ENCODE measurements at regions of chr4 and their contacts with region 1.

Region 1: DNA sequence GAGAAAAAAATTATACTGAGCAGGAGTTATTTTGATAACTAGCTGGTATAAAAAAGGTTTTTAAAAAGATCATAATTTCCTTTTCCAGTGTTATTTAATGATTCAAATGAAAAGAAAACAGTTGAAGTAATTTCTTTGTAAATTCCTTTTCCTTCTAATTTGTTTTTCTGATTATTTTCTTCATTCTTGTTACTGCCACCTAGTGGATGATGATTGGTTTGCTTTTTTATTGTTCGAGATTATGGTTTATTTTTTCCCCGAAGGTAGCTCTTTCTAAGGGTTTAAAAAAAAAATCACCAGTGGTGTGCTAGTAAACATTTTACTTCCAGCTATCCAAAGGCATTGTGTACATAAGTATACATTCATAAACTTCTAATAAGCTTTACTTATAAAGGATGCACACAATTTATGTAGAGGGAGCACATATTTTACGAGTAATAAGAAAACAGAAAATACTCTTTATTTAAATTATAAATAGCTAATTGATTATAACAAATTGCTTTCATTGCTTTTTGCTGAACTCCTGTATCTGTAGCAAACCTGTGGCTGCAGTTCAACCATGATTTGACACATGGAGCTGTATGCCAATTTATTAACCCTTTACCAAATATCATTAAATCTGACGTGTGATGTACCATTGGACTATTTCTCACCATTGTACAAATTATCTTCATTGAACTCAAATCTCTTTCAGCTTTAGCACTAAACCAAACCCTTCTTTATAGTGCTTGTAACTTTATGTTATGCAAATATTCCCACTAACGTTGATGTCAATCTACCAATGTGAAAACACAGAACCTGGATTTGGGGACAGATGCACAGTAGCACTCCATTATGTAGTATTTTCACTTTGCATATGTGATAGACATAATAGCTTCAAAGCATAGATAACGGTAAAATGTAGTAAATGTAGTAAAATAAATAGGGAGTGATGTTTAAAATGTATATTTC is 97.8 kb upstream of the ANK2 start:
- DNase-seq: no peak
- H3K4me3 Mint-ChIP-seq: no peak overlapping the region
- H3K27ac Mint-ChIP-seq: no peak overlapping the region
- H3K4me1 Mint-ChIP-seq: no peaks in the 10 kb centered on the region
- H3K27me3 Mint-ChIP-seq: peaks cover 15% of the 10 kb centered on the region

Region 2: DNA sequence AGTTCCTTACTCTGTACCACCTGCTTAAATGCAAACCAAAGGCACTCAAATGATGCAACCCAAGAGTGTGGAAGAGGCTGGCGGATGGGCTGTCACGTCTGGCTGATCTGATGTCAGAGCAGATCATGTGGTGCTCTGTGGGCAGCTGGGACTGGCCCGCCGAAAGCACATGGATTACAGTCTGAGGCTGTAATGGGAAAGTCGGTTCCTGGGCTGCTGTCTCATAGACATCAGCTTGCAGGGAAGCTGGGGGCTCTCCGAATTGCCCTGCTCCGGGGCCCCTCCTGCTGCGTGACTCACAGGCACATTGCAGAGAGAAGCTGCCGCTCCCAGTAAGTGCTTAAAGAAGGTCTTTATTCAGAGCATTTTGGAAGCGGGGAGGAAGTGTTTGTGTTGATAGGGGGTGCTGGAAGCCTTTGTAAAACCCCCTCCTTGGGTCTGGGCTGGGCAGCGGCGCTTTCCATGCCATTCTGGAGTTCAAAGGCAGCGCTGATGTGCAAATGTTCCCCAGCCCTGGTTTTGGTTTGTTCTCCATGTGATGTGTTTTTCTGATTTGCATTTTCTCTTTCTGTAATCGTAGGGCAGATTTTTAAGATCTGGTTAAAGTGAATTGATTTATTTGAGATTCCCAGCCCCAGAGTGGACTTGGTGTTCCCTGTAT is 133.6 kb before region 1 on chr4:
- CTCF ChIA-PET with region 1: no interaction called
- intact Hi-C with region 1: loop called (anchors 5 kb)
- DNase-seq: peak; percentile 88
- H3K4me3 Mint-ChIP-seq: peak overlapping the region; percentile 79
- H3K27ac Mint-ChIP-seq: peak overlapping the region; percentile 62
- H3K4me1 Mint-ChIP-seq: peaks cover 15% of the 10 kb centered on the region
- H3K27me3 Mint-ChIP-seq: peaks cover 36% of the 10 kb centered on the region

Region 3: GRCh38 chr4:112938461-112939058 is 13.1 kb before region 1 on chr4:
- CTCF ChIA-PET with region 1: interaction called, 32 read pairs
- intact Hi-C with region 1: no loop called
- DNase-seq: no peak
- H3K4me3 Mint-ChIP-seq: no peak overlapping the region
- H3K27ac Mint-ChIP-seq: no peak overlapping the region
- H3K4me1 Mint-ChIP-seq: no peaks in the 10 kb centered on the region
- H3K27me3 Mint-ChIP-seq: peaks cover 17% of the 10 kb centered on the region

Region 4: GRCh38 chr4:112968451-112969159 is 17.0 kb after region 1 on chr4:
- CTCF ChIA-PET with region 1: interaction called, 13 read pairs
- intact Hi-C with region 1: no loop called
- DNase-seq: no peak
- H3K4me3 Mint-ChIP-seq: no peak overlapping the region
- H3K27ac Mint-ChIP-seq: no peak overlapping the region
- H3K4me1 Mint-ChIP-seq: no peaks in the 10 kb centered on the region
- H3K27me3 Mint-ChIP-seq: peaks cover 5% of the 10 kb centered on the region

Region 5: DNA sequence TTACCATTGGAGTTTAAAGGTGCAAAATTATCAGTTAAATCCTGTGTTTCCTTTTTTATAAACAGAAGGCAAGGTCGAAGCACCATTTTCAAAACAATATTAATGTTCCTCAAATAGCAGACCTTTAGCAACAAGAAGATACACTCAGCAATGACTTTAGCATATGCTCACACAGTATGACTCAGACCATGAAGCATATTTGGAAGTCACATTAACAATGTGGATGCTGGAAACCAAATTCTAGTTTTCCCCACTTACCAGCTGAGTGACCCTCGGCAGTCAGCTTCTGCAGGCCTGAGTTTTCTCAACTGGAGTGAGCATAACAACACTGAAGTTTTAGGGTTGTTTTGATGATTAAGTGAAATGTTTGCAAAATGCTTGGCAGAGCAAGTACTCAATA is 228.4 kb after region 1 on chr4:
- CTCF ChIA-PET with region 1: no interaction called
- intact Hi-C with region 1: no loop called
- DNase-seq: no peak
- H3K4me3 Mint-ChIP-seq: no peak overlapping the region
- H3K27ac Mint-ChIP-seq: no peak overlapping the region
- H3K4me1 Mint-ChIP-seq: no peaks in the 10 kb centered on the region
- H3K27me3 Mint-ChIP-seq: peaks cover 2% of the 10 kb centered on the region